ENCODE measurements at regions of chr1 and their contacts with region 1.

Region 1: GRCh38 chr1:99886841-99887240 is 36.7 kb downstream of the AGL start:
- DNase-seq: no peak
- ATAC-seq: no peak
- H3K4me3 ChIP-seq: no peak overlapping the region
- H3K27ac ChIP-seq: no peak overlapping the region
- H3K4me1 ChIP-seq: no peaks in the 10 kb centered on the region
- H3K27me3 ChIP-seq: no peaks in the 10 kb centered on the region

Region 2: DNA sequence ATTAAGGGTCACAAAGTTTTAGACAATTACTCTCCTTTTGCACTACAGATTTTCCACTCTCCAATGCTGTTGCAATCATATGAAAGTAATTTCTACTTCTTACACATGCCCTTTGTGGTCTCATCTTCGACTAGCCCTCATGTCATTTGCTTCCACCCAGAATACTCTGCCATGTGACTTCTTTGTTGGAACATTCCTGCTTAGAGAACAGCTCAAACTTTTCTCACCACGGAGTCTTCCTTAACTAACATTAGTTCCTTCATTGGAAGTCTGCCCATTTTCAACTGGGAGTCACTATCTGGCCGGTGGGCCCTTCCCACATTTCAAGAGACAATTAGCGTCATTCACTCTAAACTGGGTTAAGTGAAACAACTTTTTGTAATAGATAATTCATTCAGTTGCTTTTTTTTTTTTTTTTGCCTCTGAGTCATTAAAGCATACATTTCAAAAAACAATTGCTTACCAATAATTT is 383.5 kb before region 1 on chr1:
- intact Hi-C with region 1: no loop called
- DNase-seq: peak in 2 of 3 donors; percentile 23 to 38
- ATAC-seq: peak; percentile 55 to 90
- H3K4me3 ChIP-seq: no peak overlapping the region
- H3K27ac ChIP-seq: no peak overlapping the region
- H3K4me1 ChIP-seq: no peaks in the 10 kb centered on the region
- H3K27me3 ChIP-seq: no peaks in the 10 kb centered on the region

Region 3: DNA sequence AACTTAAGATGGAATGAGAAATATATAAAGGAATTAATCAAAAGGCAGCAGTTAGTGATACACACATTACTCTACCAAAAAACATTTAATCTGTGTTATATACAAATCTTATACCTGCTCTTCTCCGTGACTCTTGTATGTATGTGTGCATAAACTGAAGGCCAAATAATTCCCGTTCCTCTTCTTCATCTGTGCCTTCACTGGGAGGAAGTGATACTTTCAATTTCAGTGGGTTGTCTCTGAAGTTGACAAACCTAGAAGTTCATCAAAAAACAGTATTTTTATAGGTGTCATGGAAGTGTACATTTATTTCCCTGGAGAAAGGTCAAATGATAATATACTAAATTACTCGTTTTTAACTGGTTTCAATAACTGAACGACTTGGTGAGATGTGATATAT is 265.4 kb after region 1 on chr1:
- intact Hi-C with region 1: loop called in 2 of 4 experiments (anchors 10 kb)
- DNase-seq: no peak
- ATAC-seq: no peak
- H3K4me3 ChIP-seq: no peak overlapping the region
- H3K27ac ChIP-seq: no peak overlapping the region
- H3K4me1 ChIP-seq: no peaks in the 10 kb centered on the region
- H3K27me3 ChIP-seq: no peaks in the 10 kb centered on the region